Head of caudate nucleus (tissue), 42 donors: ENCODE measurements at regions of chr16 and their contacts with region 1.

Region 1: GRCh38 chr16:68704232-68704867 is 32.7 kb upstream of the CDH1 start:
- DNase-seq: peak; percentile 75 to 95 (median 88)

Region 2: GRCh38 chr16:68737046-68737729 is 32.8 kb after region 1 on chr16 and contains the start of gene CDH1:
- intact Hi-C with region 1: no loop called
- DNase-seq: peak in 32 of 42 donors; percentile 11 to 72 (median 38)

Region 3: DNA sequence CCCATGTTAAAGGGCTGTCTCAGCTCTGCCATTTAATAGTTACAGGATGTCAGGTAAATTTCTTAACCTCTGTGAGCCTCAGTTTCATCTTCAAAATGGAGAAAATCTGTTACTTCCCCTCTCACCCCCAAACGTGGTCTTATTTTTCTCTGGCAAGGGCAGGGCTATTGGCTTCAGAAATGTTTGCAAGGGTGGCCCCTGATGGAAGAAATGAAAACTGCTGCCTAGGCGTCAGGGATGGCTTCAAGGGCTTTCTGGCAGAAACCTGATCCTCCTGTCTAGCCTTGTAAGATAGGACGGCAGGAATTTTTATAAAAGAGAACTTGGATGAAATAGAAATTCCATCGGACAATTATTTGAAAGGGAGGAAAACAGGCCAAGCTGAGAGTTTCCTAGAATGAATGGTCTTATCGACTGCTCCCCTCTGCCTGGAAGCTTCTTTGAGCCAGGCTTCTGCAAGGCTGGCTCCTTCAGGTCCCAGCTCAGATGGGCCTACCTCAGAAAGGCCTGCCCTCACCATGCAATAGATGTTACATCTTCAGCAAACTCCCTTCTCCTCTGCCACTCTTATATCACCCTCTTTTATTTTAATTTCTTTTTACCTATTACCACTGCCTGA is 96.0 kb after region 1 on chr16:
- intact Hi-C with region 1: loop called (anchors 2 kb)
- DNase-seq: peak in 40 of 42 donors; percentile 12 to 89 (median 66)

Region 4: GRCh38 chr16:69123910-69124309 is 419.6 kb after region 1 on chr16:
- intact Hi-C with region 1: loop called (anchors 10 kb)
- DNase-seq: peak in 33 of 42 donors; percentile 22 to 85 (median 55)